ENCODE measurements at regions of chr1 and their contacts with region 1.

Region 1: DNA sequence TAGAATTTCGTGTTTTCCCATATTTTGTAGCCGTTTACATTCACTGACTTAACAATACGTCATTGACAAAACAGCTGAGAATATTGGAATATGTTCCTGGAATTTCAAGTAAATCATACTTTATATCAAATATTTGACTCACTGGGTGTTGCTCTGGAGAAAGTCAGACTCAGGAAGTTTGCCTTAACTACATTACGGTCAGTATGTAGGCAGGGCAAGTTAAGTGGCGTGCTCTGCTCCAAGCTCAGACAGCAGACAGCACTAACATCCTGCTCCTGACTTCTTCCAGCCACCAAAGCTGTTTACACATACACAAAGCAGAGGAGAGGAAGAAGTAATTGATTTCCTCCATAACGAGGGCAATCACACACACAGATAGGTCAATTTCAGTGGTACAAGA is 414.6 kb downstream of the LRRIQ3 start:
- DNase-seq: no peak
- H3K4me3 ChIP-seq: no peak overlapping the region
- H3K27ac ChIP-seq: peak overlapping the region; percentile 51
- H3K4me1 ChIP-seq: peaks cover 23% of the 10 kb centered on the region
- H3K27me3 ChIP-seq: no peaks in the 10 kb centered on the region
- CTCF ChIP-seq: no peak

Region 2: GRCh38 chr1:73800376-73800775 is 17.0 kb after region 1 on chr1:
- CTCF ChIA-PET with region 1: no interaction called
- POLR2A ChIA-PET with region 1: no interaction called
- intact Hi-C with region 1: loop called (anchors 1 kb)
- DNase-seq: peak in 1 of 2 experiments; percentile 91
- H3K4me3 ChIP-seq: peak overlapping the region; percentile 6; the same call in 1 of the 2 replicates
- H3K27ac ChIP-seq: peak overlapping the region; percentile 65
- H3K4me1 ChIP-seq: peaks cover 51% of the 10 kb centered on the region
- H3K27me3 ChIP-seq: no peaks in the 10 kb centered on the region
- CTCF ChIP-seq: no peak